Cardiac septum (tissue), 1 donor: ENCODE measurements at regions of chr2 and their contacts with region 1.

Region 1: GRCh38 chr2:231780909-231781797 is at the start of gene PDE6D:
- DNase-seq: peak; percentile 100
- total RNA-seq, gene PDE6D: 17.9 TPM

Region 2: GRCh38 chr2:231056453-231057424 is 724.4 kb before region 1 on chr2 and contains the start of gene PSMD1:
- intact Hi-C with region 1: loop called (anchors 10 kb)
- DNase-seq: peak; percentile 96
- total RNA-seq, gene PSMD1: 87.0 TPM

Region 3: DNA sequence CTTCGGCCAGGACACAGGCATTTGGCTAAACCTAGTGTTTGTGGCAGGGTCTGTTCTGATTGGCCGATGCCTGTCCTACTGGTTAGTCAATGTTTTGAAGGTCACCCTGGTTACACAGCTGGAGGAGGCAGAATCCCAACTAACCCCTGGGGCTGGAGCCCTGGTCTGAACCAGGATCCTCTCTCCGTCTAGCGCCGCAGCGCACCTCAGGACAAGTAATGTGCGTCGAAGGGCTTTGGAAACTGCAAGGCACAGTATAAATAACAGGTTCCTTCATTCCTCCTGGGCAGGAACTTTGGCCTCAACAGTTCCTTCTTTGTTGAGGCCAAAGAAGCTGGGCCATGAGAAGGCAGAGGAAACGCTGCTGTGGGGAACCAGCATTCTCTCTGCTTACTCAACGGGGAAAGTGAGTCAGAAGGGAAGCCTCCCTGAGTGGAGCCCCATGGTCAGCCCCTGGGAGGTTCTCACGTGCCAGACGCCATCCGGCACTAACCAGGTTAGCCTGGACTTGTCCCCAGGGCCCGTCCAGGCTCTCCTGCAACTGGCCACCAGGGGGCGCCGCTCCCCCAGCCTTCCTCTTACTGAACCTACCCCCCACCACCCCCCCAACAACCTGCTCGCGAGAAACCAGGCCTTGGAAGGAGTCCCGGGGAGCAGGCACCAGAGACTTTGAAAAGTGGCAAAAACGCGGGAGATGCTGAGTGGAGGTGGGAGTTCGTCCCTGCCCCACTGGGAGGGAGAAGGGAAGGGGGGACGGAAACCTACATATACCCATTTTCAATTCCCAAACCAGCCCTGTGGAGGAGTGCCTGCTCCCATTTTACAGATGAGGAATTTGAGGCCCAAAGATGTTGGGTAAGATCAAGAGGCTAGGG is 168.7 kb before region 1 on chr2:
- intact Hi-C with region 1: loop called (anchors 2 kb)
- DNase-seq: peak; percentile 94

Region 4: GRCh38 chr2:231662028-231662810 is 118.9 kb before region 1 on chr2:
- intact Hi-C with region 1: no loop called
- DNase-seq: peak; percentile 99

Region 5: DNA sequence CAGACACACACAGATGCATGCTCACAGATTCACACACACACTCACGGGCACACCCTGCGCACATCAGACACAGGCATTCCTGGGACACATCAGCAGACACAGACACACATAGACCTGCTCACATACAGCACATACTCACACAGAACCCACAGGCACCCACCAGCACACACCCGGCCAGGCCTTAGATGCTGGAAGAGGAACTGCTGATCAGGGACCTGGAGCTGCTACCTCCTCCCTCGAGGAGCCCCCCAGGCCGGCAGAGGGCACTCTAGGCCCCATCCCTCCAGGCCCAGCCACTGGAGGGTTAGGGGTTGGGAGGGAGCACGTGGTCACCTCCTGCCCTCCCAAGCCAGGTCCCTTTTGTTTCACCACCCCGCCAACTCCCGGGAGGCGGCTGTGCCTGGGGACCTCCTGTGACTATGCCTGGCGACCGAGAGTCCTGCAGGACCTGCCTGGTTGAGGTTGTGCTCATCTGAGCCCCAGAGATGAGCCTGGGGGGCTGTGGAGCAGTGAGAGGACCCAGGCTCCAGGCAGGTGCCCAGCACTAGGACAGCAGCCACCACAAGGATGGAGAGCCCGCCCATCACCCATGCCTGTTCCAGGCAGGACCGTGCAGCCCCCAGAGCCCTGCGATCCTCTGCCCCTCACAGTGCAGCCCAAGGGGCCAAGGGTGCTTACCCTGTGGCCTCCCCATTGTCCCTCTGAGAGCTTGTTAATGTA is 93.9 kb before region 1 on chr2:
- intact Hi-C with region 1: loop called (anchors 10 kb)
- DNase-seq: no peak

Region 6: GRCh38 chr2:231706731-231707624 is 74.2 kb before region 1 on chr2:
- intact Hi-C with region 1: loop called (anchors 5 kb)
- DNase-seq: peak; percentile 99

Region 7: GRCh38 chr2:231961349-231962166 is 180.4 kb after region 1 on chr2 and contains the start of gene DIS3L2:
- intact Hi-C with region 1: loop called (anchors 2 kb)
- DNase-seq: peak; percentile 91
- total RNA-seq, gene DIS3L2: 18.6 TPM